ENCODE measurements at regions of chr2 and their contacts with region 1.

Region 1: DNA sequence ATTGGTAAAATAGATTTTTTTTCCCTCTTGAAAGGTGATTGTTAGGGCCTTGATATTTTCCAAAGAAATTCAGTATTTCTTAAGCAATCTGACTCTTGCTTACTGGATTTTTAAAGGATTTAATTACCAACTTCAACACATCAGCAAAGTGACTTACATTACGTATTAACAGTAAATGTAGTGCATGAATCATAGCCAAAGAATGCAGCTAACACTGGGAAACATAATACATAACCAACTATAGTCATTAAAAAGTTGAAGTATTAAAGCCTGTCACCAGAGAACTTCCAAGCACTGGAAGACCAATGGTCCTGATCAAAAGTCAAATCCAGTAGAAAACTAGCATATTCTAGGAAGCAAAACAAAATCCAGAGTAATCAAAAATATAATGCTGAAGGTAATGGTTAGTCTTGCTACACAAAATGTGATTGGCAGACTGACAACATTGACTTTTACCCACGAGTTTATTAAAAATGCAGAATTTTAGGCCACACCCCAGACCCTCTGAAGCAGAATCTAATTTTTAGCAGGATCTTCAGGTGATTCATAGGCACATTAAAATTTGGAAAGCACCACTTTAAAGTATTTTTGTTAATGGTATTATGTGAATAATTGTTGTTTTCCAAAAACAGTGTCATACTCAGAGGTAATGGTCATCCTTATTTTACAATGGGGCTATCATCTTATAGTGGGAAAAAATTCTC is 31.8 kb upstream of the CAVIN2 start:
- DNase-seq: peak; percentile 69
- H3K4me3 Mint-ChIP-seq: no peak overlapping the region
- H3K27ac Mint-ChIP-seq: peak overlapping the region; percentile 68
- H3K4me1 Mint-ChIP-seq: peaks cover 22% of the 10 kb centered on the region
- H3K27me3 Mint-ChIP-seq: no peaks in the 10 kb centered on the region
- CTCF ChIP-seq: no peak

Region 2: GRCh38 chr2:192148620-192149321 is 270.0 kb after region 1 on chr2:
- CTCF ChIA-PET with region 1: no interaction called
- POLR2A ChIA-PET with region 1: no interaction called
- intact Hi-C with region 1: loop called (anchors 5 kb)
- DNase-seq: no peak
- H3K4me3 Mint-ChIP-seq: no peak overlapping the region
- H3K27ac Mint-ChIP-seq: no peak overlapping the region
- H3K4me1 Mint-ChIP-seq: peaks cover 9% of the 10 kb centered on the region
- H3K27me3 Mint-ChIP-seq: no peaks in the 10 kb centered on the region
- CTCF ChIP-seq: no peak

Measured in MCF 10A (cell line).